Dendritic cell treated with granulocyte-macrophage colony-stimulating factor and Interleukin-4, amounts not matched to agents 40 ng/mL and 50 ng/mL, for 4 days (primary cell): ENCODE measurements at regions of chr12 and their contacts with region 1.

Region 1: DNA sequence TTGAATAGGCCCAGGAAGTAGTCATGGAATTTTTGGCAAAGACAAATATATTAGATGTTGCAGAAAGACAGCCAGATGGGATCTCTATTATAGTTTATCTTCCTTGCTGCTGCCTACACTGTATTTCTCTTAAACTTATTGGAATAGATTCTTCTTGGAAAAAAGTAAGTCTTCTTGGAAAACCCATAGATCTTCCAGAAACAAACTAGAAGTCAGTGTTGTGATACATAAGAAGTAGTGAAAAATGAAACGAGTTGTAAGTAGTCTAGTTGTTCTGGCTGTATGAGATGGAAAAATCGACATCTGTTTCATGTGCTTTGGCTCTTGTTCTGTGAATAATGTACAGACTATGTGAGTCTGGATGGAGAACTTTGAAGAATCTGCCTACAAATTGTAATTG is 29.0 kb downstream of the GLIPR1L2 start:
- H3K4me3 Mint-ChIP-seq: no peak overlapping the region
- H3K27ac Mint-ChIP-seq: no peak overlapping the region
- H3K4me1 Mint-ChIP-seq: peaks cover 6% of the 10 kb centered on the region
- H3K27me3 Mint-ChIP-seq: no peaks in the 10 kb centered on the region

Region 2: DNA sequence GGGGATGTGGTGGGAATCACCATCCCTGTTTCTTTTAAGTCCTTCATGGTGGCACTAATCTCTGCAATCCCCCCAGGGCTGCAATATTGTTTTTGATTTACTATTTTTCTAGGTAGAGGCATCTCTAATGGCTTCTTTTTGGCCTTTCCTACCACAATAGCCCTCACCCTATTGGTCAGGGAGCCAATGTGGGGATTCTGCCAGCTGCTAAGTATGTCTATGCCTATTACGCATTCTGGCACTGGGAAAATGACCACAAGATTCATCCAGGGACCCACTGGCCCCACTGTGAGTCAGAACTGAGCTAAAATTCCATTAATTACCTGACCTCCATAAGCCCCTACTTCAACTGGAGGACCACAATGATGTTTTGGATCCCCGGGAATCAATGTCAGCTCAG is 44.9 kb before region 1 on chr12:
- intact Hi-C with region 1: loop called (anchors 5 kb)
- H3K4me3 Mint-ChIP-seq: no peak overlapping the region
- H3K27ac Mint-ChIP-seq: no peak overlapping the region
- H3K4me1 Mint-ChIP-seq: no peaks in the 10 kb centered on the region
- H3K27me3 Mint-ChIP-seq: no peaks in the 10 kb centered on the region

Region 3: DNA sequence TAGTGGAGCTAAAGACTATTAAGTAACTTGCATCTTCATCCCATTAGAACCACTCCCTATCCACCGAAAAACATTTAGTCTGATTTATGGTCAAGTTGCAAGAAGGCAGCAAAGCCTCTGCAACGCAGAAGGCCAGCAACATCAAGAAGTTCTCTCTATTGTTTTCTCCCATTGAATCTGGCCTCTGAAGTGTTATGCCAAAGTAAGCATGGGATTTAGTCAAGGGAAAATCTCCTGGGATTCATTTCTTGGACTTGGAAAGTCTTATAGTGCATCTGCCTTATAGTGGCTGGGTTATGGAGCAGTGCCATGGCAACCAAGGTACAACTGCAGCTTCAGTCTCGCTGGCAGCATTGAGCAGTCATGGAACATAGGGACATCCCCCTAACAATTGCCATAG is 179.2 kb after region 1 on chr12:
- intact Hi-C with region 1: no loop called
- H3K4me3 Mint-ChIP-seq: no peak overlapping the region
- H3K27ac Mint-ChIP-seq: no peak overlapping the region
- H3K4me1 Mint-ChIP-seq: no peaks in the 10 kb centered on the region
- H3K27me3 Mint-ChIP-seq: no peaks in the 10 kb centered on the region